ENCODE measurements at regions of chr1 and their contacts with region 1.

Region 1: DNA sequence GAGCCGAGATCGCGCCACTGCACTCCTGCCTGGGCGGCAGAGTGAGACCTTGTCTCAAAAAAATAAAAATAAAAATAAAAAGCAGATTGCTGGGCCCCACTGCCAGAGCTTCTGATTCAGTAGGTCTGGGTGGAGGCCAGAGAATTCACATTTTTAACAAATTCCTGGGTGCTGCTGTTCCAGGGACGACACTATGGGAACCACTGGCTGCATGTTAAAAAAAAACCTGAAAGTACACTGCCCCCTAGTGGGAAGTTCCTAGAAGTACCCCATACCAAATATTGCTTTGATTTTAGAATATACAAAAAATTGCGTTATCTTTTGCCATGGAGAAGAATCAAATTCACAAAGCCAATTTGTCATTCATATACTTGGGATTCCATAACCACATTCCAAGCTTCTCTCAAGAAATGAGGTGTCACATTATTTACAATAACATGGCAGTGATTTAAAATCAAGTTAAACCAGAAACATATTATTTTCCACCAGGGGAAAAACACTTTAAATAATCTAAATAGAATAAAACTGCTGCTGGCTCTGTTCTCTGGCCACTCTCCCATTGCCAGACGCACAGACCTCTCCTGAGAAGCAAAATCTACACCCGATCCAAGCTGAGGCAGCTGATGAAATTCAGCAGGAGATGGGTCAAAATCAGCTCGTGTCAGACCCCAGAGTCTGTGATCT is 27.4 kb downstream of the SYF2 start:
- DNase-seq: peak; percentile 66
- CTCF ChIP-seq: peak; percentile 62

Region 2: DNA sequence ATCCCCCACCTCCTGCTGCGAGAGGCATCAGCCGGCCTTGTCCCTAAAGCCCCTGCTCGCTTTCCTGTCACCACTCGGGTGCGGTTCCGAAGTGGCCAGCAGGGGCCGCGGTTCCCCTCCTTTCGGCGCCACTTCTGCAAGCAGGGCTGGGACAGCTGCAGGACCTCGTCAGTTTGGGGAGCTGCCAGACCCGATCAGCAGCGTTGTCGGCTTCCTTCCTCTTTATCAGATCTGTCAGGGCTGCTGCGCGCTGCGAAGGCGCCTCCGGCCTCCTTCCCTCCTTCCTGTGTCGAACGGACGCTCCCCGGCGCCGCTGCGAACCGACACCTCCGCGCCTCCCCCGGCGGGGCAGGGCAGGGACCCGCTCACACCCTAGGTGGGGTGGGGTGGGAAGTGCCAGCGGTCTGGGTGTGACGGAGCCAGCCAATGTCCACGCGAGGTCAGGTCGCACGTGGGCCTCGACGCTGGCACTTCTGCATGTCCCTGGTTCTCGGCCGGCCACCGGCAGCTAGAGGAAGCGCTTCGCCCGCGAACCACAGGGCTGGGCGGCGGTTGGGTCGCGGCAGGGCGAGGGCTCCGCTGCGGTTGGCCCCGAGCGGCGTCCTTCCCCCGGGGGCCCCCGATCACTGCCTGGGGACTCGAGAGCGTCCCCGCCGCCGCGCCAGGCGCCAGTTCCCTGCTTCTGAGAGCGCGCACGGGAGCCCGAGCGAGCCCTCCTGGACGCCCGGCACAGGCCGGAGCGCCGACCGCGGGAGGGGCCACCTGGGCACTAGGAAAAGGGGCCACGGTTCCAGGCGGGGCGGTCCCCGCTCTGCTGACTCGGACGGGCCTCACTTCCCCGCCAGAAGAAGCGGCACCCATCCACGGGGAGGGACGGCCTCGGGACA is 356.7 kb before region 1 on chr1:
- in situ Hi-C with region 1: loop called (anchors 10 kb)
- DNase-seq: peak; percentile 88
- CTCF ChIP-seq: peak; percentile 94